ENCODE measurements at regions of chr9 and their contacts with region 1.

Region 1: GRCh38 chr9:133149126-133150107 is 14.3 kb downstream of the GBGT1 start:
- DNase-seq: peak; percentile 93 to 95
- H3K4me3 ChIP-seq: peak overlapping the region in 1 of 3 donors; percentile 72
- H3K27ac ChIP-seq: peak overlapping the region; percentile 62 to 91 (median 88)
- H3K4me1 ChIP-seq: peaks cover 23 to 32% of the 10 kb centered on the region in 2 donors
- H3K27me3 ChIP-seq: no peaks in the 10 kb centered on the region
- CTCF ChIP-seq: peak in 4 of 6 experiments; percentile 23 to 45 (median 35)
- POLR2A ChIP-seq: peak in 1 of 2 donors; percentile 82

Region 2: GRCh38 chr9:133048569-133048968 is 100.8 kb before region 1 on chr9:
- intact Hi-C with region 1: loop called (anchors 10 kb)
- DNase-seq: no peak
- H3K4me3 ChIP-seq: no peak overlapping the region
- H3K27ac ChIP-seq: no peak overlapping the region
- H3K4me1 ChIP-seq: no peaks in the 10 kb centered on the region
- H3K27me3 ChIP-seq: no peaks in the 10 kb centered on the region
- CTCF ChIP-seq: peak in 1 of 6 experiments; percentile 6
- POLR2A ChIP-seq: no peak

Region 3: GRCh38 chr9:133103183-133103986 is 46.0 kb before region 1 on chr9:
- intact Hi-C with region 1: loop called (anchors 1 kb)
- DNase-seq: peak; percentile 64 to 68
- H3K4me3 ChIP-seq: no peak overlapping the region
- H3K27ac ChIP-seq: no peak overlapping the region
- H3K4me1 ChIP-seq: no peaks in the 10 kb centered on the region
- H3K27me3 ChIP-seq: no peaks in the 10 kb centered on the region
- CTCF ChIP-seq: peak; percentile 93 to 98 (median 96)
- POLR2A ChIP-seq: no peak